ENCODE measurements at regions of chr10 and their contacts with region 1.

Region 1: GRCh38 chr10:28910956-28911355 is 233.6 kb downstream of the BAMBI start:
- DNase-seq: no peak
- ATAC-seq: peak; percentile 76
- H3K4me3 ChIP-seq: no peak overlapping the region
- H3K27ac ChIP-seq: peak overlapping the region in 1 of 2 donors; percentile 93
- H3K4me1 ChIP-seq: peaks cover 1 to 15% of the 10 kb centered on the region in 2 donors
- H3K27me3 ChIP-seq: no peaks in the 10 kb centered on the region

Region 2: DNA sequence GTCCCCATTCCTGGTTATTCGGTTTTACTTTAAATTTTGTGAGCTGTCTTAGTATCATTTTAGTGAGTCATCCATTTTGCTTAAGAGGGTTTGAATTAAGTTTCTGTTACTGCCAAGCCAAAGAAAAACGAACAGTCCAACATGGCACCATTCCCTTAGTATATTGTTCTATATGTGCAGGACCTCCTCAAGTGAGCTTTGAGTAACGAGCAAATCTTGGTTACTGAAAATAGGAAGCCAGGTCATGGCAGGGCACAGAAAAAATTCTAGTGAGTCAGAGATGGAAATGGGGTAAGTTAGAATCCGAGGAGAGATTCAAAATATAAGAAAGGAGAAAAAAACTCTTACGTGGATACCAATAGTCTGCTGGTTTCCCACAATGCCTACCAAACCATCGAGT is 59.3 kb after region 1 on chr10:
- intact Hi-C with region 1: no loop called
- DNase-seq: no peak
- ATAC-seq: no peak
- H3K4me3 ChIP-seq: no peak overlapping the region
- H3K27ac ChIP-seq: no peak overlapping the region
- H3K4me1 ChIP-seq: no peaks in the 10 kb centered on the region
- H3K27me3 ChIP-seq: no peaks in the 10 kb centered on the region

Region 3: GRCh38 chr10:28984431-28984830 is 73.5 kb after region 1 on chr10:
- intact Hi-C with region 1: loop called in 1 of 2 experiments (anchors 5 kb)
- DNase-seq: peak; percentile 94 to 96
- ATAC-seq: peak; percentile 96
- H3K4me3 ChIP-seq: no peak overlapping the region
- H3K27ac ChIP-seq: no peak overlapping the region
- H3K4me1 ChIP-seq: peaks cover 0 to 4% of the 10 kb centered on the region in 2 donors
- H3K27me3 ChIP-seq: no peaks in the 10 kb centered on the region

Region 4: DNA sequence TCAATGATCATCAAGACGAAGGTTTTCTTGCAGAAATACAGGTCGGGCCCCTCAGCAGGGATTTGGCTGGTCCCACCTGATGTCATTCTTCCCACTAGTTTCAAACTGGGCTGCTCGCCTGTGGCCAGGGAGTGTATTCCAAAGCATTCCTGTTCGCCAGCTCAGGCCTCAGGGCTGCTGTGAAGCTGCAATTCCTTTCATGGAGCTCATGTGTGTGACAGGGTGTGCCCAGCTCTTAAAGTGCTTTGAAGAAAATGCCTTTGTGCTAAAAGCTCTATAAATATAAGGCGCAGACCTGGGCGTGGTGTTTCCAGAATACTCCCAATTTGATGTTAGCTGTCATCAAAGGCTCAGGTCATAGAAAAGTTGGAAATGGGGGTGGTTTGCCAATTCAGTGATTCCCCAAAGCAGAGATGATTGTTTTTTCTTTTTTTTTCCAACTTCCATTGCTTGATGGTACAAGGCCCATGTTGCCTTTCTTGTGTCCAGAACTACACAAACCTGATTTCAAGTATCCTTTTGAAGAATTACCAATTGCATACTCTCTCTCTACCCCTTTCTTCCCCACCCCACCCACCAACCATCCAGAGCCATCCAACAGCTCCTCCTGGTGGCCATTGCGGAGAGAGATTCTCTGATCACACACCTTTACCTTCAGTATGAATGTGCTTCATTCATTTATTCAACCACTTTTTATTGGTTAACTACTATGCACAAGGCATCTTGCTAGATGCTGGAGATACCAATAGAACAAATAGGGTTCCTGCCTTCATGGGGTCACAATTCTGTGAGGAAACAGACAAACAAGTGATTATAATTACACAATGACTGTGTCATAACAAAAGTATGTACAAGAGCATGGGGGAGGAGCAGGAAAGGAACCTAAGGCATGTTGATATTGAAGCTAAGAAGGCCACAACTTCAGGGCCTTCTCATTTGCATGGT is 80.6 kb after region 1 on chr10:
- intact Hi-C with region 1: loop called in 1 of 2 experiments (anchors 5 kb)
- DNase-seq: peak; percentile 80 to 86
- ATAC-seq: peak; percentile 74
- H3K4me3 ChIP-seq: no peak overlapping the region
- H3K27ac ChIP-seq: peak overlapping the region in 1 of 2 donors; percentile 17
- H3K4me1 ChIP-seq: no peaks in the 10 kb centered on the region
- H3K27me3 ChIP-seq: no peaks in the 10 kb centered on the region

Region 5: GRCh38 chr10:29007748-29008610 is 97.0 kb after region 1 on chr10:
- intact Hi-C with region 1: no loop called
- DNase-seq: no peak
- ATAC-seq: no peak
- H3K4me3 ChIP-seq: no peak overlapping the region
- H3K27ac ChIP-seq: no peak overlapping the region
- H3K4me1 ChIP-seq: no peaks in the 10 kb centered on the region
- H3K27me3 ChIP-seq: no peaks in the 10 kb centered on the region

Measured in aorta (tissue), 5 donors.